ENCODE measurements at regions of chr12 and their contacts with region 1.

Region 1: GRCh38 chr12:120228291-120229070 is 27.6 kb upstream of the RPLP0 start:
- DNase-seq: peak; percentile 96
- ATAC-seq: peak; percentile 62
- H3K4me3 Mint-ChIP-seq: peak overlapping the region; percentile 55
- H3K27ac Mint-ChIP-seq: peak overlapping the region; percentile 98
- H3K4me1 Mint-ChIP-seq: peaks cover 78% of the 10 kb centered on the region
- H3K27me3 Mint-ChIP-seq: no peaks in the 10 kb centered on the region; the same call in 1 of the 2 replicates
- CTCF ChIP-seq: peak; percentile 73

Region 2: GRCh38 chr12:120116792-120117651 is 111.5 kb before region 1 on chr12:
- CTCF ChIA-PET with region 1: interaction called, 10 read pairs
- POLR2A ChIA-PET with region 1: interaction called, 7 read pairs
- DNase-seq: peak; percentile 98
- ATAC-seq: peak; percentile 83
- H3K4me3 Mint-ChIP-seq: peak overlapping the region; percentile 82
- H3K27ac Mint-ChIP-seq: peak overlapping the region; percentile 89
- H3K4me1 Mint-ChIP-seq: peaks cover 31% of the 10 kb centered on the region
- H3K27me3 Mint-ChIP-seq: no peaks in the 10 kb centered on the region; the same call in 1 of the 2 replicates
- CTCF ChIP-seq: no peak

Region 3: DNA sequence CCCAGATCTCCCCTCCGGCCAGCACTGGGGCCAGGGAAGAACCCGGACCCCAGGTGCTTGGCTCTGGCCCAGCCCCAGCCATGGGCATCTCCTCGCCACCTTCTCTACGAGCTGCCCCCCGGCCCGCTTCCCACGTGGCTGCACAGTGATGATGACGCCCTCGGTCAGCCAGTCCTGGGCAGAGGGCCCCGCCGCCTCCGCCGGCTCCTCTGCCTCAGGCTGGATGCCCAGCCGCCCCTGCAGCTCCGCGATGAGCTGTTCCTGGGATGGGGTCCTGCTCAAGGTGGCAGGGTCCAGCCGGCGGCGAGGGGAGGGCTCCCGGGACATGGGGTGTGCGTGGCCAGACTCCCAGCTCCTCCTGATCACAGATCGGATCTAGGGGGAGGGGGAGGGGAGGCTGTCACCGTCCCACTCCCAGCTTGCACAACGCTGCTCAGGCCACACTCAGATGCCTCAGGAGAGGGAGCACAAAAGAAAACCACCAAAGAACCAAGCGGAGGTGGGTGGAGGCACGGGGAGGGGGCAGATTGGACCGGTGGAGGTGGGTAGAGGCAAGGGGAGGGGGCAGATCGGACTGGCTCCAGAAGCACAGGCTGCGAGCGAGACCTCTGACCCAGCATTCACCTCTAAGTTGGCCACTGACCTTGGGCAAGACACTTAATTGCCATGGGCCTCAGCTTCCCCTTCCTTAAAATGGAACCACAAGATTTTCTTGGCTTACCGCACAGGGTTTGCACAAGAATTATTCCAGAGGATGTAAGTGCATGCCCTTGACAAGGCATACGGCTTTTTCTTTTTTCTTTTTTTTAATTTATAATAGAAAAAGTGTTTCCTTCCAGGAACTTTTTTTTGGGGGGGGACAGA is 11.5 kb before region 1 on chr12:
- CTCF ChIA-PET with region 1: interaction called, 39 read pairs
- POLR2A ChIA-PET with region 1: interaction called, 6 read pairs
- DNase-seq: no peak
- ATAC-seq: peak; percentile 7
- H3K4me3 Mint-ChIP-seq: no peak overlapping the region
- H3K27ac Mint-ChIP-seq: no peak overlapping the region
- H3K4me1 Mint-ChIP-seq: peaks cover 8% of the 10 kb centered on the region
- H3K27me3 Mint-ChIP-seq: no peaks in the 10 kb centered on the region
- CTCF ChIP-seq: no peak

Region 4: GRCh38 chr12:120276734-120277133 is 48.3 kb after region 1 on chr12:
- CTCF ChIA-PET with region 1: interaction called, 50 read pairs
- POLR2A ChIA-PET with region 1: no interaction called
- DNase-seq: no peak
- ATAC-seq: no peak
- H3K4me3 Mint-ChIP-seq: no peak overlapping the region
- H3K27ac Mint-ChIP-seq: no peak overlapping the region
- H3K4me1 Mint-ChIP-seq: no peaks in the 10 kb centered on the region
- H3K27me3 Mint-ChIP-seq: no peaks in the 10 kb centered on the region; the same call in 1 of the 2 replicates
- CTCF ChIP-seq: no peak

Region 5: DNA sequence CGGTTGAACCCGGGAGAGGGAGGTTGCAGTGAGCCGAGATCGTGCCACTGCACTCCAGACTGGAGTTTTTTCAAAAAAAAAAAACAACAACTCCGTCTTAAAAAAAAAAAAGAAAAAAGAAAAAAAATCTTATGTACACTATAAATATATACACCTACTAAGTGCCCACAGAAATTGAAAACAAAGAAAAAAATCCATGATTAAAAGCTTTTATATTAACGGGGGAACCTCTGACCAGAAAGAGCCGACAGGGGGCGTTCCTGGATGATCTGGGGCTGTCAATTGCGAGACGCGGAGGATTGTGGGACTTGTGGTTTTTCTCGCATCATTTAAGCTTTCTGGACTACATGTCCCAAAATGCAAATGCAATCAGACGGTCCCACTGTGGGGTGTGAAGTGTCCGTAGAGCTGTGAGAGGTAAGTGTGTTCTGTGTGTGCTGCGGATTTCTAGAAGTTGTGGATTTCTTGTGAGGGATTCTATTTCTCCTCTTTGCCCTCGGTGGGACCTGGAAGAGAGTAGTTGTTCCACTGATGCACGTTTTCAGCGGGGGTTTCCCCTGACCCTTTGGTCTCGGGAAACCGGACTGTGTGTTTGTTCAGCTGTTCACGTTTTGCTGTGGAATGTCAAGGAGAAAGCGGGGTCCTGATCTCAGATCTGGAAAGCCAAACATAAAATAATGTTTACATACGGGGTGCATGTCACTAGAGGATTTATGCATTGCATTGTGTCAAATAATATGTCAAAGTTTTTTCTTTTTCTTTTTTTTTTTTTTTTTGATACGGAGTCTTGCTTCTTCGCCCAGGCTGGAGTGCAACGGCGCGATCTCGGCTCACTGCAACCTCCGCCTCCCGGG is 73.7 kb after region 1 on chr12 and contains the start of gene SIRT4:
- CTCF ChIA-PET with region 1: interaction called, 51 read pairs
- POLR2A ChIA-PET with region 1: interaction called, 18 read pairs
- DNase-seq: peak; percentile 89
- ATAC-seq: peak; percentile 95
- H3K4me3 Mint-ChIP-seq: peak within 1 kb of the TSS; percentile 95
- H3K27ac Mint-ChIP-seq: peak within 1 kb of the TSS; percentile 91
- H3K4me1 Mint-ChIP-seq: peaks cover 6% of the 10 kb centered on the region; the same call in 1 of the 2 replicates
- H3K27me3 Mint-ChIP-seq: peaks cover 3% of the 10 kb centered on the region; the same call in 1 of the 2 replicates
- CTCF ChIP-seq: peak; percentile 52; the same call in 1 of the 2 replicates
- total RNA-seq, gene SIRT4: 2.1 to 4.3 TPM (median 2.8 TPM) in 3 replicates

Region 6: DNA sequence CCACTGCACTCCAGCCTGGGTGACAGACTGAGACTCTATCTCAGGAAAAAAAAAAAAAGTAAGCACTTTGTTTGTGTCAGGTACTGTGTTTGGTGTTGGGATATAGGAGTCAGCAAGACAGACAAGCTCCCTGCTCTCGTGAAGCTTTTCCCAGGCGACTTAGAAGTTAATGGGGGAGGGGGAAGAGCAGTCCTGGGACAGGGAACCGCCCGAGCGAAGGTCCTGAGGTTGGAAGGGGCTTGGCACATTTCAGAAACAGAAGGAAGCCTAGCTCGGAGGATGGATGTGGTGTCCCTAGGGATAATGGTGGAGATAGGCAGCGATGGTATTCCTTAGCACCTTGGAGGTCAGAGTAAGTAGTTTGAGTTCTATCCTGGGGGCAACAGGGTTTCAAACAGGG is 200.9 kb after region 1 on chr12:
- CTCF ChIA-PET with region 1: interaction called, 13 read pairs
- POLR2A ChIA-PET with region 1: no interaction called
- DNase-seq: no peak
- ATAC-seq: no peak
- H3K4me3 Mint-ChIP-seq: no peak overlapping the region
- H3K27ac Mint-ChIP-seq: no peak overlapping the region
- H3K4me1 Mint-ChIP-seq: peaks cover 8% of the 10 kb centered on the region
- H3K27me3 Mint-ChIP-seq: no peaks in the 10 kb centered on the region
- CTCF ChIP-seq: no peak

Measured in WTC11 (cell line).